ENCODE measurements at regions of chr3 and their contacts with region 1.

Region 1: GRCh38 chr3:63911873-63912767 is at the start of gene SCAANT1:
- DNase-seq: peak; percentile 69 to 85 (median 83)
- ATAC-seq: peak; percentile 76
- H3K4me3 ChIP-seq: peak within 1 kb of the TSS; percentile 61
- H3K4me3 Mint-ChIP-seq: peak within 1 kb of the TSS; percentile 87 to 98 (median 90)
- H3K27ac ChIP-seq: peak within 1 kb of the TSS; percentile 96
- H3K27ac Mint-ChIP-seq: peak within 1 kb of the TSS; percentile 88 to 99 (median 96)
- H3K4me1 ChIP-seq: peaks cover 15 to 21% of the 10 kb centered on the region in 2 donors
- H3K4me1 Mint-ChIP-seq: peaks cover 4 to 56% (median 45%) of the 10 kb centered on the region in 7 donors
- H3K27me3 ChIP-seq: no peaks in the 10 kb centered on the region
- H3K27me3 Mint-ChIP-seq: no peaks in the 10 kb centered on the region
- total RNA-seq, gene SCAANT1: not detected

Region 2: GRCh38 chr3:63818281-63819150 is 93.6 kb before region 1 on chr3:
- CTCF ChIA-PET with region 1: no interaction called
- POLR2A ChIA-PET with region 1: no interaction called
- intact Hi-C with region 1: loop called in 1 of 2 experiments (anchors 1 kb)
- DNase-seq: peak; percentile 15 to 69 (median 50)
- ATAC-seq: peak; percentile 80
- H3K4me3 ChIP-seq: no peak overlapping the region
- H3K4me3 Mint-ChIP-seq: no peak overlapping the region
- H3K27ac ChIP-seq: no peak overlapping the region
- H3K27ac Mint-ChIP-seq: no peak overlapping the region
- H3K4me1 ChIP-seq: no peaks in the 10 kb centered on the region
- H3K4me1 Mint-ChIP-seq: peaks cover 0 to 5% (median 0%) of the 10 kb centered on the region in 7 donors
- H3K27me3 ChIP-seq: no peaks in the 10 kb centered on the region
- H3K27me3 Mint-ChIP-seq: no peaks in the 10 kb centered on the region

Region 3: DNA sequence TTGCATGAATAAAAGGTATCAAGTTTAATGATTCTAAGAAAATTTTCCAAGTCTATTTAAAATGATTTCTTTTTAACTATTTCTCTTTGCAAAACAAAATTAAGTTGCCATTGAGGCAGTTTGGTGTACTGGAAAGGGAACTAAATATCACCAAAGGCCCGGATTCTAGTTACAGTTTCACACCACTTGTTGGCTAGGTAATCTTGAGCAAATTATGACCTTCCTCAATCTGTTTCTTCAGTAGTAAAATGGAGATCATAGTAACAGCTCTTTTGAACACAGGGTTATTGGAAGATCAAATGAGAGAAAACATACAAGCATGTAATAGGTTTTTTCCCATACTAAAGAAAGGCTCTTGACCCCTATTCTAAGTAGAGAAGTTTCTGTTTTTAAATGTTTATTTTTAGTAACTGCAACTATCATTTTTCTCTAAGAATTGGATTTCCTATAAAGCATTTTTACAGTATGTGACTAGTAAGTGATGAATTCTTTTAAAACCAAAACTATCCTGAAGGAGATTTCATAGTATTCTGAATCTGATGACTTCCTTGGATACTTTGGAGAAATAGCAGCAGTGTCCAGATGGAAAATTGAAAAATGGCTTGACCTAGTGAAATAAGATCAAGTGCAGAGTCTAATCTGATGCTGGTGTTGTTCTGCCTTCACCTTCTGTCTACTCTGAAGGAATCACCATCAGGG is 15.6 kb before region 1 on chr3:
- CTCF ChIA-PET with region 1: no interaction called
- POLR2A ChIA-PET with region 1: interaction called, 3 read pairs
- intact Hi-C with region 1: loop called (anchors 1 kb)
- DNase-seq: no peak
- ATAC-seq: no peak
- H3K4me3 ChIP-seq: no peak overlapping the region
- H3K4me3 Mint-ChIP-seq: no peak overlapping the region
- H3K27ac ChIP-seq: no peak overlapping the region
- H3K27ac Mint-ChIP-seq: peak overlapping the region in 5 of 9 donors; percentile 1 to 27 (median 15)
- H3K4me1 ChIP-seq: peaks cover 0 to 4% of the 10 kb centered on the region in 2 donors
- H3K4me1 Mint-ChIP-seq: peaks cover 28 to 68% (median 54%) of the 10 kb centered on the region in 7 donors
- H3K27me3 ChIP-seq: no peaks in the 10 kb centered on the region
- H3K27me3 Mint-ChIP-seq: no peaks in the 10 kb centered on the region

Region 4: DNA sequence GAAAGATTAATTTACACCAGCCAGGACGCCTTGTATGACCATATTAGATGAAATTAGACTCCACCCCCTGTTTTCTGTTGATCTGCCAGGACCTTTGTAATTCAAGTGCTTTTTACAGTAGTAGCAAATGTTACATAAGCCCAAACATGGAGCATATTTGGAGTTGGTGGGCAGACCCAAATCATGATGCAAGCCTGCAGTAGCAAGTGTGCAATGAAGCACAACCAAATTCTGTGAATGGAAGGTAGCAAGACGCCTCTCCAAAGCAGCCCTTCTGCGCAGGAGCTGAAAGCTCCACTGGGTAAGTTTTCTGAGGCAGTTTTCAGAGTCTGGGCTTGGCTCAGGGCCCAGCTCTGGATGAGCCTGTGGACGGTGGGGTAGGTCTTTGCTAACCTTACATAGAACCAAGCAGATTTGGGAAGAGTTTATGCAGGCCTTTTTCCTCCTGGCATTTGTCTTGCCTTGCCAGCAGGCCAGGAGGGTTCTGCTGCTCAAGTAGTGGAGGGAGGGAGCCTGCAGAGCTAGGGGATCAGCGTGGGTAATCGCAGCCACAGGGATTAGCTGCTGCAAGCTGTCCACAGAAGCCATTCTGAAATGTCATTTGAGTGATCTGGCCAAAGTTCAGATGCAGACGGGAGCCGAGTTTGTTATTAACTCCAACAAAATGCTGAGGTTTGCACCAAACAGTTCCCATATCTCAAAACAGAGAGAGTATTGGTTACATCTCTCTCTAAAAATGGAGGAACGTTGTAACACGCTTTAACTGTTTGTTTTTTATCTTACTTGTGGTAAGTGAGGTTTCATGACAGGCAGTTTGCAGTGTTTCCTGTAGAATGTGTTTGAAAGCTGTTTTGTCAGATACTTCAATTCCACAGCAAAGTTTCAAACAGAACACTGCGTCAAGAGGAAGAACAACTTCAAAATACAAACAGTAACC is 55.8 kb after region 1 on chr3:
- CTCF ChIA-PET with region 1: no interaction called
- POLR2A ChIA-PET with region 1: interaction called, 14 read pairs
- intact Hi-C with region 1: loop called (anchors 1 kb)
- DNase-seq: peak; percentile 14 to 93 (median 87)
- ATAC-seq: peak; percentile 88
- H3K4me3 ChIP-seq: peak overlapping the region; percentile 91
- H3K4me3 Mint-ChIP-seq: peak overlapping the region; percentile 86 to 98 (median 92)
- H3K27ac ChIP-seq: peak overlapping the region; percentile 80
- H3K27ac Mint-ChIP-seq: peak overlapping the region; percentile 92 to 99 (median 96)
- H3K4me1 ChIP-seq: peaks cover 46 to 48% of the 10 kb centered on the region in 2 donors
- H3K4me1 Mint-ChIP-seq: peaks cover 43 to 78% (median 65%) of the 10 kb centered on the region in 7 donors
- H3K27me3 ChIP-seq: no peaks in the 10 kb centered on the region
- H3K27me3 Mint-ChIP-seq: no peaks in the 10 kb centered on the region

Region 5: DNA sequence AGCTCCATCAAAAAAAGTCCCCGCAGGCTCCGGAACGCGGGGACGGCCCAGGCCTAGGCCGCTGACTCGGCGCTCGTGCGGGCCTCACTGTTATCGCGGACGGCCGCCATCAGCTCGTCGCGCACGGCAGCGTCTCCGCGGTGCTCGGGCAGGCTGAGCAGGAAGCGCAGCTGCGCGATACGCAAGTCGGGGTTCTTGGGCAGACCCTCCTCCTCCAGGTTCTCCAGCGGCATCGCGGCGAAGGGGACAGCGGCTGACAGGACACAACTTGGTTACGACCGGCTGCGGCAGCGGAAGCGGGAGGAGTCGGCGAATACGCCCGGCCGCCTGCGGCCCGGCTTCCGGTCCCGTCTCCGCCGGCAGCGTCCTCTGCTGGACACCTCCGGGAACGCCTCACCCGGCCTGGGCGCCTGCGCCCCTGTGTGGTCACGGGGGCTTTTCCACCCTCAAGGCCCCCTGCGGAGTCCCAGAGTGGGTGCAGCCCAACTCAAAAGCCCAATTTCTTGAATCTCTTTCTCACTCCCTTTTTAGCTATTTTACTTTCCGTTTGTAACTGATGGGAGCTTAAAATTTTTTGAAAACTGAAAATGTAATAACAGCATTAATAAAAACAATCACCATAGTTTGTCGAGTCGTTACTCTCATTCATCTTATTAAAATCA is 111.2 kb after region 1 on chr3 and contains the start of gene PSMD6:
- CTCF ChIA-PET with region 1: interaction called, 3 read pairs
- POLR2A ChIA-PET with region 1: no interaction called
- intact Hi-C with region 1: loop called (anchors 1 kb)
- DNase-seq: peak; percentile 87 to 98 (median 93)
- ATAC-seq: peak; percentile 99
- H3K4me3 ChIP-seq: peak within 1 kb of the TSS; percentile 74
- H3K4me3 Mint-ChIP-seq: peak within 1 kb of the TSS; percentile 86 to 92 (median 89)
- H3K27ac ChIP-seq: peak within 1 kb of the TSS; percentile 96
- H3K27ac Mint-ChIP-seq: peak within 1 kb of the TSS; percentile 72 to 95 (median 90)
- H3K4me1 ChIP-seq: peaks cover 17 to 19% of the 10 kb centered on the region in 2 donors
- H3K4me1 Mint-ChIP-seq: peaks cover 18 to 46% (median 40%) of the 10 kb centered on the region in 7 donors
- H3K27me3 ChIP-seq: no peaks in the 10 kb centered on the region
- H3K27me3 Mint-ChIP-seq: peaks cover 7 to 20% (median 16%) of the 10 kb centered on the region in 5 donors
- total RNA-seq, gene PSMD6: 63.4 to 103 (median 84.1) TPM